Panc1 (cell line): ENCODE measurements at regions of chr12 and their contacts with region 1.

Region 1: GRCh38 chr12:8890313-8891085 is 23.8 kb upstream of the PHC1 start:
- DNase-seq: no peak
- ATAC-seq: peak; percentile 78
- H3K4me3 ChIP-seq: peak overlapping the region; percentile 40 to 53
- H3K27ac ChIP-seq: no peak overlapping the region
- H3K4me1 ChIP-seq: no peaks in the 10 kb centered on the region
- H3K27me3 ChIP-seq: no peaks in the 10 kb centered on the region; the same call in 1 of the 2 replicates
- CTCF ChIP-seq: peak; percentile 87

Region 2: GRCh38 chr12:8662593-8662992 is 227.9 kb before region 1 on chr12 and contains the start of gene MFAP5:
- CTCF ChIA-PET with region 1: interaction called, 9 read pairs
- POLR2A ChIA-PET with region 1: no interaction called
- in situ Hi-C with region 1: no loop called
- intact Hi-C with region 1: loop called (anchors 5 kb)
- DNase-seq: no peak
- ATAC-seq: no peak
- H3K4me3 ChIP-seq: no peak within 1 kb of the TSS
- H3K27ac ChIP-seq: no peak within 1 kb of the TSS
- H3K4me1 ChIP-seq: no peaks in the 10 kb centered on the region
- H3K27me3 ChIP-seq: no peaks in the 10 kb centered on the region; the same call in 1 of the 2 replicates
- CTCF ChIP-seq: no peak
- total RNA-seq, gene MFAP5: not detected

Region 3: GRCh38 chr12:8681041-8681902 is 209.2 kb before region 1 on chr12:
- CTCF ChIA-PET with region 1: interaction called, 6 read pairs
- POLR2A ChIA-PET with region 1: no interaction called
- in situ Hi-C with region 1: no loop called
- intact Hi-C with region 1: loop called (anchors 2 kb)
- DNase-seq: no peak
- ATAC-seq: no peak
- H3K4me3 ChIP-seq: no peak overlapping the region
- H3K27ac ChIP-seq: no peak overlapping the region
- H3K4me1 ChIP-seq: no peaks in the 10 kb centered on the region
- H3K27me3 ChIP-seq: no peaks in the 10 kb centered on the region
- CTCF ChIP-seq: no peak

Region 4: DNA sequence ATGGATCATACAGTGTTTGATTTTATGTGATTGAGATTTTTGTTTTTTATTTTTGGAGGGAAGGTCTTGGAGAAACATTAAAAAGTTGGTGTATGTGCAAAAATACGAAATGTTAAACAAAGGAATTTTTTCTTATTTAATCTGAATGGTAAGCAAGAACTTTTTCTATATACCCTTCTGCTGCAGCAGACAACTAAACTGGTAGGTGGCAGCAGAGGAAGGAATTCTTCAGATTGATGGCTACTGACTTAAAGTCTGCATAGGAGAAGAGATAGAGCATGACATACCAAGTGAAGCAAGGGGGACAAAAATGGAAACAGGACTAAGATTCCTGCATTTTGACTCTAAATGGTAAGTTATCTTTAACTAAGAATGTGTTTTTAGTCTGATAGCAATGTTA is 110.1 kb before region 1 on chr12:
- CTCF ChIA-PET with region 1: no interaction called
- POLR2A ChIA-PET with region 1: no interaction called
- in situ Hi-C with region 1: no loop called
- intact Hi-C with region 1: loop called (anchors 10 kb)
- DNase-seq: peak; percentile 2
- ATAC-seq: no peak
- H3K4me3 ChIP-seq: no peak overlapping the region
- H3K27ac ChIP-seq: no peak overlapping the region
- H3K4me1 ChIP-seq: no peaks in the 10 kb centered on the region
- H3K27me3 ChIP-seq: no peaks in the 10 kb centered on the region
- CTCF ChIP-seq: peak; percentile 32; the same call in 1 of the 2 replicates

Region 5: GRCh38 chr12:8823565-8824300 is 66.8 kb before region 1 on chr12:
- CTCF ChIA-PET with region 1: no interaction called
- POLR2A ChIA-PET with region 1: no interaction called
- in situ Hi-C with region 1: no loop called
- intact Hi-C with region 1: no loop called
- DNase-seq: no peak
- ATAC-seq: no peak
- H3K4me3 ChIP-seq: no peak overlapping the region
- H3K27ac ChIP-seq: no peak overlapping the region
- H3K4me1 ChIP-seq: no peaks in the 10 kb centered on the region
- H3K27me3 ChIP-seq: no peaks in the 10 kb centered on the region
- CTCF ChIP-seq: peak; percentile 52